Endothelial cell of umbilical vein (primary cell): ENCODE measurements at regions of chr7 and their contacts with region 1.

Region 1: DNA sequence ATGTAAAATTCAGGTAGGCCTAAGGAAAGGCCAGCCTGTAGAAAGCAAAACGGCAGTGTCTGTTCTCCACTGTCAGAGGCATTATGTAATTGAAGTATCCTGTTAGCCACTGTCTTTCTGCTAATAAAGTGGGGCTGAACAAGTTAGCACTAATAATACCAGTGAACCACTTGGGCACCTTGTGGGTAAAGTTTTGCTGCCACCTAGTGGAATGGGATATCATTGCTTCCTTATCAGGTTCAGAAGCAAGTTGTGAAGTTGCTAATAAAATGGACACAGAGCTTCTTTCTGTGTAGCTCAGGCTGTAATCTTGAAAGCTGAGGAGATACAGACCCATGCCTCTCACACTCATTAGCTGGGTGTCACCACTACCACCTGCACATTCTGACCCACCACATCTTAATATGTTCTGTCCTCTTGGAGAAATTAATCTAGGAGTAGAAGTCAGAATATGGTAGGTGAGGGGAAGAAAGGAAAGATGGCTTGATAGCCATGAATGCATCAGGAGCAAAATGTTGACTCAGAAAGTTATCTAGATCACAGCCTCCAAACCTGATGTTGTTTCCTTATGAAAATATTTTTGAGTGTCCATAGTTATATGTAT is 175.1 kb downstream of the SEPTIN7 start:
- DNase-seq: peak; percentile 78
- H3K4me3 ChIP-seq: no peak overlapping the region
- H3K27ac ChIP-seq: no peak overlapping the region
- H3K4me1 ChIP-seq: no peaks in the 10 kb centered on the region
- H3K27me3 ChIP-seq: peaks cover 3 to 7% of the 10 kb centered on the region in 2 experiments
- CTCF ChIP-seq: peak; percentile 55 to 69
- POLR2A ChIP-seq: no peak

Region 2: GRCh38 chr7:35185907-35186731 is 789.8 kb before region 1 on chr7:
- CTCF ChIA-PET with region 1: no interaction called
- POLR2A ChIA-PET with region 1: no interaction called
- dilution Hi-C with region 1: no loop called
- intact Hi-C with region 1: loop called (anchors 10 kb)
- DNase-seq: peak; percentile 24
- H3K4me3 ChIP-seq: peak overlapping the region; percentile 8 to 34 (median 11)
- H3K27ac ChIP-seq: no peak overlapping the region
- H3K4me1 ChIP-seq: peaks cover 8% of the 10 kb centered on the region
- H3K27me3 ChIP-seq: peaks cover 7 to 17% of the 10 kb centered on the region in 2 experiments
- CTCF ChIP-seq: no peak
- POLR2A ChIP-seq: no peak

Region 3: DNA sequence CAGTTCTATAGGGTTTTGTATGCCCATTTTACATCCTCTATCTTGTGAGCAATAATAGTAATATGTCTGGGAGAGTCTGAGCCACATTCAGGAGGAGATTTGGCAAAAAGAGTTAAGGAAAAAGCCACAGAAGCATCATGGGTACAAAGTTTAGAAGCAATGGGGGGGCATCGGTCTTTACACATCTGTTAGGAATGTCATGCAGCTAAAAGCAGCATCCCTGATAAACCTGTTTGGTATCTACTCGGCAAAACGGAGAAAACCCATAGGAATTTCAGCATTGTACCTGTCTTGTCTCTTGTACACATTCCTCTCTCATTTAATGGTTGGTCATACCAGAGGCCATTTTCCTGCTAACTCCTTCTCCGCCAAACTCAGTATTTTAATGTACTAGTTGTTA is 268.5 kb before region 1 on chr7:
- CTCF ChIA-PET with region 1: interaction called, 8 read pairs
- POLR2A ChIA-PET with region 1: no interaction called
- dilution Hi-C with region 1: no loop called
- intact Hi-C with region 1: loop called (anchors 1 kb)
- DNase-seq: no peak
- H3K4me3 ChIP-seq: no peak overlapping the region
- H3K27ac ChIP-seq: no peak overlapping the region
- H3K4me1 ChIP-seq: peaks cover 6% of the 10 kb centered on the region
- H3K27me3 ChIP-seq: no peaks in the 10 kb centered on the region
- CTCF ChIP-seq: no peak
- POLR2A ChIP-seq: no peak

Region 4: DNA sequence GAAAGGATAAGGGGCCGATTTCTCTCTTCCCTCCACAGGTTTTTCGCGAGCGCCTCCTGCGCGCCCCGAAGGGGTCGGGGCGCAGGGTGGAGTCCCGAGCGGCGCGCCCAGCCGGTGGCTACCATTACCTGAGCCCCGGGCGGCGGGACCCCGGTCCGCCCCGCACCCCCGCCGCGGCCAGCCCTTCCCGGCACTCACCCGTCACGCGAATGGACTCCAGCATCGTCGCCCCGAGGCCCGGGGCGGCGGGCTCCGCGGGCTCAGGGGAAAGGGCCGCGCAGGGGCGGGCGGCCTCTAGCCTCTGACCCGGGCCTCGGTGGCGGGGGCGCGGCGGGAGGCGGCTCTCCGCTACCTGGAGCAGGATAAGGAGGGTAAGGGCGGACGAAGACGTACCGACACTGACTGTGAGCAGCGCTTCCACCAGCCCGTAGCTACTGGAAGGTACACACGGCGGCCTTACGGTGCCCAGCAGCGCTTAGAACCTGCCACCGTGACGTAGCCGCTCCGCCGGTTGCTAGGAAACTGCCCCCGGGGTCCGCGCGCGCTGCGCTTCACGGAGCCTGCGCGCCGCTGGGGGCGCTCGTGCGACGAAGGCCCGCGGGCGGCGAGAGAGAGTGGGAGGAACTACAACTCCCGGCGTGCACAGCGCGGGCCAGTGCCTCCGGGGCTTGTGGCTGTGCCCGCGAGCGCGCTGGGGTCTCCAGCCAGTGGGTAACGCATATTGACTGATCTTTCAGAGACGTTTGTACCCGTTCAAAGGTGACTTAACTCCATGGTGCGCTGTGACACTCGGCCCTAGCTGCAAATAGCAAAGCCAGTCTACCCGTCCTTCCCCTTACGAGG is 391.0 kb after region 1 on chr7:
- CTCF ChIA-PET with region 1: no interaction called
- POLR2A ChIA-PET with region 1: no interaction called
- dilution Hi-C with region 1: no loop called
- intact Hi-C with region 1: no loop called
- DNase-seq: peak; percentile 90
- H3K4me3 ChIP-seq: peak overlapping the region; percentile 47 to 76 (median 68)
- H3K27ac ChIP-seq: no peak overlapping the region
- H3K4me1 ChIP-seq: no peaks in the 10 kb centered on the region
- H3K27me3 ChIP-seq: peaks cover 13 to 23% of the 10 kb centered on the region in 2 experiments
- CTCF ChIP-seq: peak; percentile 92 to 94
- POLR2A ChIP-seq: no peak